Adrenal gland (tissue), 19 donors: ENCODE measurements at regions of chr16 and their contacts with region 1.

Region 1: DNA sequence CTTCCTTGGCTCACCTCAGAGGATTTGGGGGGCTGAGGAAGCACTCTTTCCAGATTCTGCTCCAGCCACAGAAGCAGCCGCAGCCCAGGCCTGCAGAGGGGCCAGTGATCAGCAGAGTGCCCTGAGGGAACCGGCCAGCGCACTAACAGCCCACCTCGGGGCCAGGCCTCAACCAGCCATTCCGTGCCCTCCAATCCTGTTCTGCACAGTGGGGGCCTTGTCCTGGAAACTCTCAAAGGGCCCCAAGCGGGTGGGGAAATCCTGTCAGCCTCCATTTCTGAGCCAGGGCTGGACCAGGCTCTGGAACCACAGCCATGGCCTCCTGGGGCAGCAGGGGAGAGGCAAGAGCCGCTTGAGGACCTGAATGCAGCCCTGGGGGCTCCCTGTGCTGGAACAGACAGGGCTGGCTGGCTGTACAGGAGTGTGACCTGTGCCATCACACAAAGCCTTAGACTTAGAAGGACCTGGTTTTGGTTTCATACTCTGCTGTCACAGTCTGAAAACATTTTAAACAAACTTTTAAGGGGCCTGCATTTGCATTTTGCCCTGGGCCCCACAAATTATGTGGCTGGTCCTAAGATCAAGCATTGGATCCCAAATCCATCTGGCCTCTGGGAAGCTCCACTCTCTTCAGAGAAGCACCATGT is 10.0 kb downstream of the CNGB1 start:
- DNase-seq: no peak
- H3K4me3 ChIP-seq: no peak overlapping the region
- H3K27ac ChIP-seq: no peak overlapping the region
- H3K4me1 ChIP-seq: no peaks in the 10 kb centered on the region
- H3K27me3 ChIP-seq: no peaks in the 10 kb centered on the region
- CTCF ChIP-seq: no peak
- POLR2A ChIP-seq: no peak

Region 2: DNA sequence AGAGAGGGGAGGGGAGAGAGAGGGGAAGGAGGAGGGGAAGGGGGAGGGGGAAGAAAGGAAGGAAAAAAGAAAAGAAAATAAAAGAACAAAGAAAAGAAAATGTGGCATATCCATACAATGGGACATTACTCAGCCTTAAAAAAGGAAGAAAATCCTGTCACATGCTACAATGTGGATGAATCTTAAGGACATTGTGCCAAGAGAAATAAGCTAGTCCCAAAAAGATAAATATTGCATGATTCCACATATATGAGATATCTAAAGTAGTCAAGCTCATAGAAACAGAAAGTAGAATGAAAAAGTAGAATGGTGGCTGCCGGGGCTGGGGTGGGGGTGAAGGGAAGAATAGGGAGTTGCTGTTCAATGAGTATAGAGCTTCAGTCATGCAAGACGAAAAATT is 30.4 kb before region 1 on chr16:
- intact Hi-C with region 1: loop called in 1 of 2 experiments (anchors 2 kb)
- DNase-seq: no peak
- H3K4me3 ChIP-seq: no peak overlapping the region
- H3K27ac ChIP-seq: no peak overlapping the region
- H3K4me1 ChIP-seq: no peaks in the 10 kb centered on the region
- H3K27me3 ChIP-seq: no peaks in the 10 kb centered on the region
- CTCF ChIP-seq: no peak
- POLR2A ChIP-seq: no peak